ENCODE measurements at regions of chr13 and their contacts with region 1.

Region 1: DNA sequence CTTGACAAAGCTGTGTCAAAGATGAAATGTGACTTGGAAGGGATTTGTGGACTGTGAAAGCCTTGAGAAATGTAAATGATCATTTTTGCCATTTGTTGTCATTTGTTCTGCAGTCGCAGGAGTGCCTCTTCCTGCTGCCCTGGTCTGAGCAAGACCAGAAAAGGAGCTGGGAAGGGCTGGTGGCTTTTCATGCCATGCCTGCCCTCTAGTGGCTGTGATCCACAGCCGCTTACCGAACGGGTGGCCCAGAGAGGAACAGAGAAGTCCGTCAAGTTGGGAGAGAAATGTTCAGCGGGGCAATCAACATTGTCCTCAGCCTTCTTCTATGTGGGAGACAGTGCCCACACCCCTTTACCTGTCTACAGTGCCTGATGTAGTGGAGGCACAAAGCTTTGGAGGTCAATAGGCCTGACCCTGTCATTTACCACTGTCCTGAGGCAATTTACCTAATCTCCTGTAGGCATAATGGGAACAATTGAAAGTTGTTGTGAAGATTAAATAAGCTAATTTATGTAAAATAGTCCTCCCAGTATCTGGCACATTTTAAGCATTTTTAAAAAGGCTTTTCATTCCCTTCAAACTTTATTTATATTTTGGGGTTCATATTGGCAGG is 224.4 kb downstream of the B3GLCT start:
- DNase-seq: no peak
- H3K4me3 ChIP-seq: no peak overlapping the region
- H3K27me3 ChIP-seq: peaks cover 2% of the 10 kb centered on the region
- CTCF ChIP-seq: peak; percentile 96

Region 2: GRCh38 chr13:31199849-31200636 is 224.2 kb before region 1 on chr13 and contains the start of gene B3GLCT:
- CTCF ChIA-PET with region 1: interaction called, 24 read pairs
- POLR2A ChIA-PET with region 1: no interaction called
- DNase-seq: no peak
- H3K4me3 ChIP-seq: peak within 1 kb of the TSS; percentile 72
- H3K27me3 ChIP-seq: no peaks in the 10 kb centered on the region
- CTCF ChIP-seq: peak; percentile 51
- polyA plus RNA-seq, gene B3GLCT: 3.3 and 4.5 TPM in 2 replicates

Region 3: DNA sequence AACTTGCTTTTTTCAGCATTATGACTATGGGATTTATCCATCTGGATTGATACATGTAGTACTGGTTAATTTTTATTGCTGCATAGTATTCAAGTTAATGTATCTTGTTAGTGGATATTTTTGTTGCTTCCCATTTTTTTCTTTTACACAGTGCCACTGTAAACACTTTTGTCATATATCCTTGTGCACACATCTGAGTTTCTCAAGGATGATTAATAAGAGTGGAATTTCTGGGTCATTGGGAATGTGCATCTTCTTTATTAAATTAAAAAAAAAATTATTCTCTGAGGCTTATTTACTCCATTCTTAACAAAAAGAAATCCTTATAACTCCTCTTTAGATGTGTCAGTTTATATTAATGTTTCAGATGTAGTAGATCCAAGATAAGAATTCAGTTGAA is 197.2 kb before region 1 on chr13:
- CTCF ChIA-PET with region 1: interaction called, 12 read pairs
- POLR2A ChIA-PET with region 1: no interaction called
- DNase-seq: no peak
- H3K4me3 ChIP-seq: no peak overlapping the region
- H3K27me3 ChIP-seq: no peaks in the 10 kb centered on the region
- CTCF ChIP-seq: no peak

Region 4: GRCh38 chr13:31236211-31236786 is 187.9 kb before region 1 on chr13:
- CTCF ChIA-PET with region 1: interaction called, 168 read pairs
- POLR2A ChIA-PET with region 1: no interaction called
- DNase-seq: no peak
- H3K4me3 ChIP-seq: no peak overlapping the region
- H3K27me3 ChIP-seq: no peaks in the 10 kb centered on the region
- CTCF ChIP-seq: peak; percentile 73

Region 5: GRCh38 chr13:31242916-31243315 is 181.3 kb before region 1 on chr13:
- CTCF ChIA-PET with region 1: interaction called, 168 read pairs
- POLR2A ChIA-PET with region 1: no interaction called
- DNase-seq: peak; percentile 71
- H3K4me3 ChIP-seq: no peak overlapping the region
- H3K27me3 ChIP-seq: no peaks in the 10 kb centered on the region
- CTCF ChIP-seq: no peak

Region 6: DNA sequence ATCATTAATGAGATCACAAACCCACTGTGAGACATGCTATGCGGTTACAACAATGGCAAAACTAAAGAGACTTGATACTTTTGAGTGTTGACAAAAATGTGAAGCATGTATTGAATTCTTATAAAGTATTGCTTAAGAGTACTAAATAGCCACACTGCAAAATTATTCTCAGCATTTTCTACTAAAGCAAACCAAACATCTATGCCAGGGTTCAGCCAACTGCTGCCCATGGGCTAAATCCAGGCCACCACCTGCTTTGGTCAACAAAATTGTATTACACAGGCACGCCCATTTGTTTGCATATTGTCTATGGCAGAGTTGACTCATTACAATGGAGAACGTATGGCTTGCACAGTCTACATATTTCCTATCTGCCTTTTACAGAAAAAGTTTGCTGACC is 89.1 kb before region 1 on chr13:
- CTCF ChIA-PET with region 1: no interaction called
- POLR2A ChIA-PET with region 1: no interaction called
- DNase-seq: no peak
- H3K4me3 ChIP-seq: no peak overlapping the region
- H3K27me3 ChIP-seq: no peaks in the 10 kb centered on the region
- CTCF ChIP-seq: no peak

Region 7: DNA sequence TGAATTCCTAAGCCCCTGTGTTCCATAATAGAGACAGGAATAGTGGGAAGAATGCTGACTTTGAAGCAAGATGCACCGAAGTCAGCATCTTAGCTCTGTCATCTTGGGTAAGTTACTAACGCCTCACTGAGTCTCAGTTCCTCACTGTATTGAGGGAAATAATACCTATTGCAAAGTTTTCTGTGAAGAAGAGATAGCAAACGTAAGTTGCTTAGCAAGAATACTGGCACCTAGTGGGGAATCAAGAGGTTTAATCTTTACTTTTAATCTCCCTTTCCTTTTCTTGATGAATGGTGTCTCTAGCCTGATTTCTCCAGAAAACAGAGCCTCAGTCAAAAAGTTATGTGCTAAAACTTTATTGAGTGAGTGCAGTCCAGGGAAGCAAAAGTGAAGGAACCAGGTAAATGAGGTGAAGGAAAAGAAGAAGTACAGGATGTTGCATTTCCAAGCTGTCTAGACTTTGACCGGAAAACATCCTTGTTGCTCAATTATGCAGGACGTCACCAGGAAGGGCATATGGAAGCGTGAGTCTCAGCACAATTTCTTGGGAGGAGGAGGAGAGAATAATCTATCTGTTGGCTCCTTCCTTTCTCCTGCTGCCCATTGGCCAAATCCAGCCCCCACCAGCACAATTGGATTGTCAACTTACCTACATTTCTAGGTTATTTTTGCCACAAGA is 14.4 kb before region 1 on chr13:
- CTCF ChIA-PET with region 1: interaction called, 34 read pairs
- POLR2A ChIA-PET with region 1: no interaction called
- DNase-seq: no peak
- H3K4me3 ChIP-seq: no peak overlapping the region
- H3K27me3 ChIP-seq: peaks cover 4% of the 10 kb centered on the region; the same call in 1 of the 2 replicates
- CTCF ChIP-seq: peak; percentile 16; the same call in 1 of the 2 replicates

Region 8: DNA sequence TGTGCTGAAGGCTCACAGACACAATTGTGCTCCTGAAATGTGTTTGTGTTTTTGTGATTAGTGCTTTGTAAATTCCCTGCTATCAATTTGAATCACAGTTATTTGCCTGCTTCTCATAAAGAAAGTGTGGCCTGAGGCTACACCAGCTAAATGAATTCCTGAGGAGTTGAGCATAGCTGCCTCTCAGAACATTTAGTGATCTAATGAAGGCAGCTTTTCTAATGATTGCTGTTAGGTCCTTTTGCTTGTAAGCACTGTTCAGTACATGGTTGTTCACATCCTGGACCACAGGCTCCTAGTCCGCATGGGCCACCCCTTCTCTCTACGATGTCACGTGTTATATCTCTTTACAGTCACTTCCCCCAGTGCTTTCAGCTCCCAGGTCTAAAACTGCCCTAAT is 13.8 kb after region 1 on chr13:
- CTCF ChIA-PET with region 1: interaction called, 19 read pairs
- POLR2A ChIA-PET with region 1: no interaction called
- DNase-seq: peak; percentile 31
- H3K4me3 ChIP-seq: no peak overlapping the region
- H3K27me3 ChIP-seq: no peaks in the 10 kb centered on the region
- CTCF ChIP-seq: no peak

Region 9: GRCh38 chr13:31587698-31588266 is 163.6 kb after region 1 on chr13:
- CTCF ChIA-PET with region 1: no interaction called
- POLR2A ChIA-PET with region 1: no interaction called
- DNase-seq: no peak
- H3K4me3 ChIP-seq: no peak overlapping the region
- H3K27me3 ChIP-seq: peaks cover under 1% of the 10 kb centered on the region; the same call in 1 of the 2 replicates
- CTCF ChIP-seq: no peak

Region 10: GRCh38 chr13:31649766-31650165 is 225.5 kb after region 1 on chr13:
- CTCF ChIA-PET with region 1: no interaction called
- POLR2A ChIA-PET with region 1: no interaction called
- DNase-seq: no peak
- H3K4me3 ChIP-seq: no peak overlapping the region
- H3K27me3 ChIP-seq: no peaks in the 10 kb centered on the region
- CTCF ChIP-seq: no peak

Region 11: GRCh38 chr13:31982539-31982938 is 558.3 kb after region 1 on chr13:
- CTCF ChIA-PET with region 1: no interaction called
- POLR2A ChIA-PET with region 1: no interaction called
- DNase-seq: peak; percentile 81
- H3K4me3 ChIP-seq: no peak overlapping the region
- H3K27me3 ChIP-seq: no peaks in the 10 kb centered on the region
- CTCF ChIP-seq: no peak

Measured in BJ (cell line).